Activated T-helper 1 cell treated with anti-CD3 and anti-CD28 coated beads, Interleukin-12 subunit alpha, Interleukin-12 subunit beta, Interleukin-2, Interleukin-4 antibody, amounts not matched to agents 30 ng/mL and 10 ng/mL and 1 ng/mL, durations not matched to agents 14 hours and 24 hours and 36 hours (primary cell): ENCODE measurements at regions of chr7 and their contacts with region 1.

Region 1: DNA sequence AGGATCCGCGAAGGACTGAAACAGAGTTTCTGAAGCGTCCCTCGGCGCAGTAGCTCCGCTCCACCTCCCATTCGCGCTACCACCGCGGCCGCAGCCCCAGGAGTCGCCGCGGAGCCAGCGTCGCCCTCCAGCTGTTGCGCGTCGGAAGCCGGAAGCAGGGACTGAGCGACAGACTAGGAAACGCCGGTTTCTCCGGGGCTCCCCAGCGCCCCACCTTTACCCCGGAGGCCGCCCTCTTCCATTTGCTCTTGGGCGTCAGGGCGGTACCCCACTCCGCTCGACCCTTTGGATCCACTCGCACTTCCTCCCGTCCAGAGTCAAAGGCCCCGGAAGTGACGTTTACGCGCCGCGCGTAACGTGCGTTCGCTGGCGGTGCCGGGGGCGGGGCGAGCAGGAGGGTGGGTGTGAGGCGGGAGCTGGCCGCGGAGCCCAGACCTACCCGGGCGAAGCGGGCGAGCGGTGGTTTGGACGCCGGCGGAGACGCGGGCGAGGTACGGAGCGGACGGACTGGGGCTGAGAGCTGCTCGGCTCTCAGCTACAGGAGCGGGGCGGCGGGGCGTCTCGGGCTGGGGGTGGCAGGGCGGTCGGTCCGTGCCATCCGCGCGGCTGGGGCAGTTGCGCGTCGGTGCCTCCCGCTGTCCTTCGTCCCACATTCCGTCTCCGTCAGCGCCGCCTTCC is at the start of gene RABGEF1:
- DNase-seq: peak; percentile 98
- H3K4me3 Mint-ChIP-seq: peak within 1 kb of the TSS; percentile 95
- H3K27ac Mint-ChIP-seq: peak within 1 kb of the TSS; percentile 94
- H3K4me1 Mint-ChIP-seq: peaks cover 15% of the 10 kb centered on the region
- H3K27me3 Mint-ChIP-seq: no peaks in the 10 kb centered on the region
- total RNA-seq, gene RABGEF1: 26.7 and 27.8 TPM in 2 replicates

Region 2: GRCh38 chr7:65981965-65982792 is 758.3 kb before region 1 on chr7 and contains the start of gene GUSB:
- intact Hi-C with region 1: loop called (anchors 5 kb)
- DNase-seq: peak; percentile 88
- H3K4me3 Mint-ChIP-seq: peak within 1 kb of the TSS; percentile 87
- H3K27ac Mint-ChIP-seq: peak within 1 kb of the TSS; percentile 90
- H3K4me1 Mint-ChIP-seq: peaks cover 7% of the 10 kb centered on the region
- H3K27me3 Mint-ChIP-seq: no peaks in the 10 kb centered on the region
- total RNA-seq, gene GUSB: 49.7 and 50.1 TPM in 2 replicates

Region 3: DNA sequence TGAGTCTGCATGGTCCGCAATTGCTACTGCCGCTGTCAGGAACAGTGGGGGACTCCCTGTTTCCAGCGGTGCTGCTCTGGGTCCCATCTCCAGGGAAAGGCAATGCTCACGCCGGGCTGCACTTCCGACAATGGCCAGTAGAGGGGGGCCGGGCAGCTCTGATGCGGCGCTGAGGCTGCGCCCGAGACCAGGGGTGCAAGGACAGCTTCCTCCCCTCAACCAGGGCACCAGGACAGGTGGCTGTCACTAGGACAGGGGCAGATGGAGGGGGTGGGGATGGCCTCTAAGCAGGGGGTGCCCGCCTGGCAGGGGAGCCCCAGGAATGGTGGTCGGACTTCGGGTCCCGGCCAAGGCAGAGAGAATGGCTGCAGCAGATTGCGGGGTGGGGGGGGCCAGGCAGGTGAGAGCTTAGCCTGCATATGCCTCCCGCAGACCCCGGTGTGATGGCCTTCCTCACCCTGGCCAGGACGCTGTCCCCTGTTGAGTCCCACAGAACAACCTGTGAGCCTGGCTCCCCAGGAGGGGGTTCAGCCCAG is 182.8 kb before region 1 on chr7:
- intact Hi-C with region 1: loop called (anchors 2 kb)
- DNase-seq: peak; percentile 62
- H3K4me3 Mint-ChIP-seq: no peak overlapping the region
- H3K27ac Mint-ChIP-seq: no peak overlapping the region
- H3K4me1 Mint-ChIP-seq: no peaks in the 10 kb centered on the region
- H3K27me3 Mint-ChIP-seq: no peaks in the 10 kb centered on the region

Region 4: DNA sequence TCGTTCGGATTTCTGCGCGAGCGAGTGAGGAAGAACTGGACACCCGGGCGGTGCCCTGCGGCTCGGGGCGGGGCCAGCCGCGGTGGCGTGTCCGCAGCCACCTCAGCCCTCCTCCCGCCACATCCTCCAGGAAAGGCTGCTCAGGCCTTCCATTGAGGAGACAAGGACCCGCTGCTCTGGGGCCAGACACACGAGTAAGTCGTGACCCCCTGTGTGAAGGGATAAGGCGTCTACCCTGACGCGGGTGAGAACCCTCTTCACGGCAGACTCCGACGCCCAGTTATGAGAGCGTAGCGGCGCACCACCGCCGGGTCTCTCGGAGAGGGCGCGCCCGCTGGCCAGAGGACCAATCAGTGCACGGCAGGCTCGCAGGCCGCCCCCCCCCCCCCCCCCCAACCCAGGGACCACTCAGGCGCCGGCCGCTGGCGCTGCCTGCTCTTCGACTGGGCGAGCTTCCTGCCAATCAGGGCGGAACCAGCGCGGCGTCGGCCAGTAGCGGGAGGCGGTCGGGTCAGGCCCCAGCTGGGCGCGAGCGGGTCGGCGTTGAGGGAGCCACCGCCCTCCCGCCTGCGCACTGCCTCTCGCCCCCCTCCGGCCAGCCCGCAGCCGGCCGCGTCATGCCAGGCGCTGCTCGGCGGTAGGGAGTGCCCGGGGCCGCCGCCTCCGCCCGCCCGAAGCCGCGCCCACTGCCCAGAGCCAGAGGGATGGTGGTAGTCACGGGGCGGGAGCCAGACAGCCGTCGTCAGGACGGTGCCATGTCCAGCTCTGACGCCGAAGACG is 111.9 kb before region 1 on chr7 and contains the start of gene KCTD7:
- intact Hi-C with region 1: loop called (anchors 1 kb)
- DNase-seq: peak; percentile 94
- H3K4me3 Mint-ChIP-seq: peak within 1 kb of the TSS; percentile 90
- H3K27ac Mint-ChIP-seq: peak within 1 kb of the TSS; percentile 83
- H3K4me1 Mint-ChIP-seq: peaks cover 39% of the 10 kb centered on the region
- H3K27me3 Mint-ChIP-seq: no peaks in the 10 kb centered on the region
- total RNA-seq, gene KCTD7: 11.0 and 13.8 TPM in 2 replicates

Region 5: DNA sequence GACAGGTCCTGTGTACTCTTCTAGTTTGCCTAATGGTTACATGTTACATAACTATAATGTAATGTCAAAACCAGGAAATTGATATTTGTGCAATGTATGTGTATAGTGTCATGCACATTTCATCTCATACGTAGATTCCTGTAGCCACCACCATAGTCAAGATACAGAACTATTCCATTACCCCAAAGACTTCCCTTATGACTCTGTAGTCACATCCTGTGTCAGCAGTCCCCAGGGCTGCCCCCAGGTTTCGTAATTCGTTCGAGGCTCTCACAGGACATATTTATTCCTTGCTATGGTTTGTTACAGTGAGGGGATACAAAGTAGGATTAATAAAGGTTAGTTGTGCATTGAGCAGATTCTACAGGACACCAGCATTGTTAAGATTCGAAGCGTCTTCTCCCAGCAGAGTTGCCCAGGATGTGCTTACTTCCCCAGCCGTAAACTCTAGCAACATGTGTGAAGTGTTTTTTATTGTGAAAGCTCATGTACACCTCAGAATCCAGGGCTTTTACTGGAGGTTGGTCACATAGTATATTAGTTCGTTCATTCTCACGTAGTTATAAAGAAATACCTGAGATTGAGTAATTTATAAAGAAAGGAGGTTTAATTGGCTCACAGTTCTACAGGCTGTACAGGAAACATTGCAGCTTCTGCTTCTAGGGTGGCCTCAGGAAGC is 18.6 kb after region 1 on chr7:
- intact Hi-C with region 1: loop called (anchors 2 kb)
- DNase-seq: no peak
- H3K4me3 Mint-ChIP-seq: peak overlapping the region; percentile 4
- H3K27ac Mint-ChIP-seq: peak overlapping the region; percentile 73
- H3K4me1 Mint-ChIP-seq: peaks cover 33% of the 10 kb centered on the region
- H3K27me3 Mint-ChIP-seq: no peaks in the 10 kb centered on the region